Left cardiac atrium (tissue), 4 donors: ENCODE measurements at regions of chr11 and their contacts with region 1.

Region 1: DNA sequence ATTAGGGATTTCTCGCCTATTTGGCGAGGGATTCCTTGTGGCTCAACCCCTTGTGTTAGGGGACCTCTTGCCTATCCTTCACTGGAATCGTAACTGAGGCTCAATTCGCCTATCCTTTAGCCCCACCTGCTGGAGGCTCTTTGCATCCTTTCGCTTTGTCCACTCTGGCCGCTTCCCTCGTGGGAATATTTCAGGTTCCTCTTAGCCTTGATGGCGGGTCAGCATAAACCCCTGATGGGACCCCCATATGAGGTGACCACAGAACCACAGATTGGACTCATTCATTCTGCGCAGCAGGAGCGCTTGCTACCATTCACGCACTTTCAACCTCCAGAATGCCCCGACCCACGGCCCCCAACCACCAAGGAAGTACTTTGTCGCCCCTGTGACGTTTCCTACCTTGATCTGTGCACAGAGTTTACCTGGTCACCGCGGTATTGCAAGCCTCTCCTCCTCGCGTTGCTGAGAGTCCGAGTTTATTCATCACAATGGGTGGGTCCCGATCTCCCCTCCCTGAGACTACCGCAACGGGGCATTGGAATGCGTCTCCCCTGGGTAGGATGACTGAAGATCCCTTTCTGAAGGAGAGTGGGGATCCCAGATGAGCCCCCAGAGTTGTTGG is at the start of gene OR52N2:
- DNase-seq: peak; percentile 72
- ATAC-seq: peak; percentile 94 to 97
- total RNA-seq, gene OR52N2: not detected

Region 2: GRCh38 chr11:4626207-4627099 is 1182.2 kb before region 1 on chr11:
- intact Hi-C with region 1: loop called in 1 of 2 experiments (anchors 5 kb)
- DNase-seq: peak; percentile 39
- ATAC-seq: peak; percentile 52 to 61

Region 3: DNA sequence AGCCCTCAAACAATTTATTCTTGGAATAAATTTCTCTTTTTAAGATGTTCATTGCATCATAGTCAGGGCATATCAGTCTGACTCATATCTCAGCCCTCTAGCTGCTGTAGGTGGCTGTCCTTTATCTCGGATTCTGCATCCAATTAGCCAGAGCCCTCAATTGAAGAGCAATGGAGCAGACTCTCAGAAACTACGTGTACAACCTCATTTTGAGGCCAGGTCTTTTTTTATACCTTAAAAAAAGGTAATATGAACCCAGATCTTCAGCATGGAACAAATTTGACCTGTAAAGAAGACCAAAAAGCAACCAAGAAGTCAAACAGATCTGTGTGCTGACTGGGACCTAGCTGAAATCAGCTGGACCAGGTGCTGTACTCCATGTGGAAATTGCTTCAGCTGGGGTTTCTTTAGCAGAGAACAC is 679.1 kb before region 1 on chr11:
- intact Hi-C with region 1: loop called in 1 of 2 experiments (anchors 5 kb)
- DNase-seq: no peak
- ATAC-seq: no peak

Region 4: GRCh38 chr11:5476184-5476819 is 332.3 kb before region 1 on chr11:
- intact Hi-C with region 1: loop called (anchors 2 to 5 kb)
- DNase-seq: peak; percentile 32
- ATAC-seq: peak in 1 of 2 donors; percentile 47